ENCODE measurements at regions of chr2 and their contacts with region 1.

Region 1: GRCh38 chr2:223970343-223971128 is 13.3 kb downstream of the MRPL44 start:
- DNase-seq: peak; percentile 76
- ATAC-seq: peak; percentile 83
- H3K4me3 Mint-ChIP-seq: no peak overlapping the region
- H3K27ac Mint-ChIP-seq: no peak overlapping the region
- H3K4me1 Mint-ChIP-seq: peaks cover 6% of the 10 kb centered on the region
- H3K27me3 Mint-ChIP-seq: no peaks in the 10 kb centered on the region

Region 2: DNA sequence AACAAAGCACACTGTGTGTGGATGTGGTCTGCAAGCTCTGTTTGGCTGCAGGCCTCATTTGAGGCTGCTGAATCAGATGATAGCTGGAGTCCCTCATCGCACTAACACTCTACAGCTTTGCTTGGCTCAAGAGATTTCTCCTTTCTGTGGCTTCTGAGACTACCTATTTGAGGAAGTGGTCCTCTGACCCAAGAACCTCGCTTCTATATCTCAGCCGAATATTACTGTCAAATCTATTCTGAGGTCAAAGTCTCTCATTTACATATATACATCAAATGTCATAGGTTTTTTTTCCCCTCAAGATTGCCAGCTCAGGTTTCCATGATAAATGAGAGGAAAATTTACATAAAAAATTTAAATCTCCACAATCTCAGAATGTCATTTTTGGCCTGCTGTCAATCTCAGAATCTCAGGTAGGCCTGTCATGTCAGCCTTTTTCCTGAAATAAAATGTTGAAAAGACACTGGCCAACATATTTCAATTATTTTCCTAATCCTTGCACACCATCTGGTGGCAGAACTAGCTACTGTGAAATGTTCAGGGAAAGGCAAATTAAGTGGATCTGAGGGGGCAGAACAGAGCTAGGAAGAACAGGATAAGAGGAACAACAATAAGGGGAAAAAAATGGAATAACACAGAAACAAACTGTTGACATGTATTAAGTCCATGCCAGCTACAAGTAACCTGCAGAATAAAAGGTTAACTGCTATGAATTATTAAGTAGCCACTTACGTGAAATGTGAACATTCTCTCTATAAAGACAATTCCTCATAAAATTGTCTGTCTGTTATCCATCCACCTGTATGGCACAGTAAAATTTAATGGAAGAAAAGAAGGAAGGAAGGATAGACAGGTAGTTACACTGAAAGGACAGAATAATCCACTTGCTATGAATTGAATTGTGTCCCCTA is 172.5 kb before region 1 on chr2:
- CTCF ChIA-PET with region 1: no interaction called
- POLR2A ChIA-PET with region 1: no interaction called
- DNase-seq: no peak
- ATAC-seq: no peak
- H3K4me3 Mint-ChIP-seq: no peak overlapping the region
- H3K27ac Mint-ChIP-seq: no peak overlapping the region
- H3K4me1 Mint-ChIP-seq: peaks cover 3% of the 10 kb centered on the region
- H3K27me3 Mint-ChIP-seq: no peaks in the 10 kb centered on the region

Region 3: DNA sequence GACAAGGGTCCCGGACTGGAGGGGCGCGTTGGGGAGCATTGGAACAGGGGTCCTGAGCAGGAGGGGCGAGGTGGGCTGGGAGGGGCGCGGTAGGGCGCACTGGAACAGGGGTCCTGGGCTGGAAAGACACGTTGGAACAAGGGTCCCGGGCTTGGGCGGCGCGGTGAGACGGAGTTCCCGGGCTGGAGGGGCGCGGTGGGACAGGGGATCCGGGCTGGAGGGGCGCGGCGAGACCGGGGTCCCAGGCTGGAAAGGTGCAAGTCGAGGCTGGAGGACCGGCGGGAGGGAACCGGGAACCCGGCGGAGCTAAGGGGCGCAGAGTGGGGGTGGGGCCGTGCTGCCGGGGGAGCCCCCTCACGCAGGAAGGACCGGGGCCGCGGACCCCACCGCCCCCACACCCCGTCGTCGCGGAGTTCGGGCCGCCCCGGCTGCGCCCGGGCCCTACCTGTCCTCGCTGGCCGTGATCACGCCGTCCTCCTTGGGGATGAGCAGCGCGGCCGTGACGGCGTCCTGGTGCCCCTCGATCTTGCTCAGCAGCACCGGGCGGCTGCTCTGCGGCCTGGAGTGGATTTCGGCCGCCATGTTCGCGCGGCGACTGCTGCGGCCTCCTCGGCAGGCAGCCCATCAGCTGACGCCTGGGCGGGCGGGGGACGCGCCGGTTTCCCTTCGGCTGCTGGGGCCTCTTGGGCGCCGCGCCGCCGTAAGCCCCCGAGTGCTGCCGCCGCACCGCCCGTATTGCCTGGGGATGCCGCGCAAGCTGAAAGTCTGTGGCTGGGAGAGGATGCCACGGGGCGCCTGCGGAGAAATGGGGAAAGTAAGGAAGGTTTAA is 25.6 kb before region 1 on chr2 and contains the start of gene WDFY1:
- CTCF ChIA-PET with region 1: interaction called, 12 read pairs
- POLR2A ChIA-PET with region 1: no interaction called
- DNase-seq: peak; percentile 86
- ATAC-seq: peak; percentile 88
- H3K4me3 Mint-ChIP-seq: peak within 1 kb of the TSS; percentile 89
- H3K27ac Mint-ChIP-seq: peak within 1 kb of the TSS; percentile 91
- H3K4me1 Mint-ChIP-seq: peaks cover 60% of the 10 kb centered on the region
- H3K27me3 Mint-ChIP-seq: no peaks in the 10 kb centered on the region
- total RNA-seq, gene WDFY1: 41.5 to 47.1 TPM

Region 4: DNA sequence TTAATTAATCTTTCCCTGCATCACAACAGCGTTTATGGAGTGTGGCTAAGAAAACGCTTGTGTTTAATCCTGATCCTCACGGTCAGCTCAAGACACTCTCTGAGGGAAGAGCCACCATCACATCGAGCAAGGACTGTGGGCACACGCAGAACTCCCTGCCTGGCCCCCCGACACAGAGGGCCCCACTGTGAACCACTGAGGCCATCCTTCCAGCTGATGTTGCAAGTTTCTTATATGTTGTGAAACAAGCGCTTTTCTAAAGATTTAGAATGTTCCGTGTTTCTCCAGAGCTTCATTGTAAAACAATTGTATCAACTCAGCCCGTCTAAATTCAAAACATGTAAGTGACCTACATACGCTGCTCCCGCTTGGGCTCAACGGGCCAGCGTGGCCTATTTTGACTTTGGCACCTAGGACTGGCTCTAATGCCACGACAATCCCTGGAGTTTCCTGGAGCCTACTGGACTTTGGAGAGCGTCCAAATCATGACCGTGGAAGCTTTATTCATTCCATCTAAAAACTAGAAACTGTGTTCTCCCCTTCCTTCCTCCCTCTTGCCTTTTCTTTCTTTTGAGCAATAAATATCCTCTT is 33.7 kb after region 1 on chr2:
- CTCF ChIA-PET with region 1: interaction called, 13 read pairs
- POLR2A ChIA-PET with region 1: no interaction called
- DNase-seq: no peak
- ATAC-seq: no peak
- H3K4me3 Mint-ChIP-seq: no peak overlapping the region
- H3K27ac Mint-ChIP-seq: no peak overlapping the region
- H3K4me1 Mint-ChIP-seq: no peaks in the 10 kb centered on the region
- H3K27me3 Mint-ChIP-seq: no peaks in the 10 kb centered on the region

Region 5: GRCh38 chr2:224284134-224284946 is 313.8 kb after region 1 on chr2:
- CTCF ChIA-PET with region 1: interaction called, 157 read pairs
- POLR2A ChIA-PET with region 1: no interaction called
- DNase-seq: peak; percentile 36
- ATAC-seq: no peak
- H3K4me3 Mint-ChIP-seq: no peak overlapping the region
- H3K27ac Mint-ChIP-seq: no peak overlapping the region
- H3K4me1 Mint-ChIP-seq: no peaks in the 10 kb centered on the region
- H3K27me3 Mint-ChIP-seq: peaks cover 35% of the 10 kb centered on the region

Measured in activated CD8-positive, alpha-beta T cell treated with anti-CD3 and anti-CD28 coated beads, Interleukin-2, amount 10 ng/mL, durations not matched to agents 7 days and 5 days (primary cell).